ENCODE measurements at regions of chr17 and their contacts with region 1.

Region 1: DNA sequence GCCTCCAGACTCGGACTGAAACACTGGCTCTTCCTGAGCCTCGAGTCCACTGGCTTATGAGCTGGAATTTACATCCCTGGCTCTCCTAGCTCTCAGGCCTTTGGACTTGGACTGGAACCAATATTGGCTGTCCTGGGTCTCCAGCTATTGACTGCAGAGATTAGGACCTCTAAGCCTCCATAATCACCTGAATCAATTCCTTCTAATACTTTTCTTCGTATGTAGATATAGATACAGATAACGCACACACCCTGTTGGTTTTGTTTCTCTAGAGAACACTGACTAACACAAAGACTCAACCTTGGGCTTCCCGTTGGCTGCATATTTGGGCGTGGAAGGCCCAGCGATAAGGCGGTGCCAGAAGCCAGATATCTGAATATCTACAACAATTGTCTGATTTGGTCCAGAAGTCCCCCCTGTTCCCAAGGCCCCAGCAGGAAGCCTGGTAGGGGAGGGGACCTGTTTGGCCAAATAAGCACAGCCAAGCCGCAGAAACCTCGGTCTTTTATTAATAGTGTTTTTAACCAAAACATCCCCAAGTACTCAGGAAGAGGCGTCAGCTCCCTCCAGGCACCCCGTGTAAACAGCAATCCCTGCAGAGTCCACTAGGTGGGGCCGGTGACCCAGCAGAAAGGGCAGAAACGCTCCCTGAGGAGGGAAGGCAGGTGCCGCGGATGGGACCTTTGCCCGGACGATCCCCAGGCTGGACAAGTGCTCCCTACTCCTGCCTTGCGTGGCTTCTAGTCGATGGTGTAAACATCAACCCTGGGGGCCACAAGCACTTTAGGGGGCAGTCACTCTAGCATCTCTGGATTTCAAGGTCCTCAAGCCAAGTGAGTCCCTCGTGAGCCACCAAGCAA is 57.0 kb downstream of the ABR start:
- DNase-seq: peak in 1 of 2 donors; percentile 91
- H3K4me3 ChIP-seq: no peak overlapping the region
- H3K27ac ChIP-seq: peak overlapping the region; percentile 54 to 75
- H3K4me1 ChIP-seq: peaks cover 0 to 22% of the 10 kb centered on the region in 2 donors
- H3K27me3 ChIP-seq: no peaks in the 10 kb centered on the region
- CTCF ChIP-seq: peak; percentile 91 to 92 (median 92)

Region 2: DNA sequence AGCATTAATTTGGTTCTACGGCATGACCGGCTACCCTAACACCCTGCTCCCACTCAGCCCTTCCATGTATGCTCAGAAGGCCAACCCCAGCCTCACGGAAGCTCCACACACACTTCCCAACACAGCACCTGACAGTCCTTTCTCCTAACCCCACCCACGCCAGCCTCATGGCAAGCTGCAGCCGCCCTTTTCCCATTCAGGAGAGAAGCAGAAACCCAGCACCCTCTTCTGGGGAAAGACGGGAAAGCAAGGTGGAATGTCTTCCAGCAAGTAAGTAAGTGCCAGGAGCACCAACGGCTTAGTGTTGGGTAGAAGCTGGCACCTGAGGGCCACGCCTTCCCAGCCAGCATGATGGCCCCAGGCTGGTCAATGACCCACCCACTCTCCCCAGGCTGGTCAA is 24.9 kb after region 1 on chr17:
- intact Hi-C with region 1: loop called (anchors 1 kb)
- DNase-seq: peak in 1 of 2 donors; percentile 77
- H3K4me3 ChIP-seq: no peak overlapping the region
- H3K27ac ChIP-seq: no peak overlapping the region
- H3K4me1 ChIP-seq: no peaks in the 10 kb centered on the region
- H3K27me3 ChIP-seq: no peaks in the 10 kb centered on the region
- CTCF ChIP-seq: peak; percentile 40 to 62 (median 45)

Region 3: DNA sequence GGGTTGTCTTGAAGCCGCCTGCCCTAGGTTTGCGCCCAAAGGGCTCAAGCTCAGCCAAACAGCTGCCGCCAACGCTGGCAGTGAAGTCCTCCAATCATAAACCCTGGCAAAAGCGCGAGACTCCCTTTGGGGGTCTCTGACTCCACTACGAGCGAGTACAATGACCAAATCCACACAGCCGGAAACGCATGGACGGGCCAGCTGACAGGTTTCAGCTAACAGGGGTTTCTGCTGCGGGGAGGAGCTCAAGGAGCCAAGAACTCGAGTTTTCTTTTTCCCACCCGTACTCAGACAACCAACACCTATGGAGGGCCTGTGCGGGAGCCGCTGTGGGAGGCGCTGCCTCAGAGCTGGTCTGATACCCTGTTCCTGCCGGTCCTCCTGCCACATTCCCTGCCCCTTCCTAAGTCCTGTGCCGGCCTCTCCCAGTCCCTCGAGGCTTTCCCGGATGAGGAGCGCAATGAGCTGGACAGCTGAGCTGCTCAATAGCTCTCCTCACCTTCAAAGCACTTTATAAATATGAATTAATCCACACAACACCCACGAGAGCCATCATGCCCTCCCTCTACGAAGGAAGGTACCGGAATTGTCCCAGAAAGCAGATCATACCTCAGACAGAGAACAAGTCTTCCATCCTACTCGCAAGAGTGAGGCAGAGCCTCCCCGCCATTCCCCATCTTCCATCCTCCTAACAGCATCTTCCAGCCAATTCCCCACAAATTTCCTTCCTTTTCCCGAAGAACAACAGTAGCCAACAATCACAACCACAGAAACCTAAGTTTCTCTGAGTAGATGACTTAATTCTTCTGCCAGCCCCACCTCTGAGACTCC is 50.9 kb after region 1 on chr17:
- intact Hi-C with region 1: no loop called
- DNase-seq: no peak
- H3K4me3 ChIP-seq: no peak overlapping the region
- H3K27ac ChIP-seq: peak overlapping the region in 1 of 2 donors; percentile 25
- H3K4me1 ChIP-seq: peaks cover 3 to 16% of the 10 kb centered on the region in 2 donors
- H3K27me3 ChIP-seq: no peaks in the 10 kb centered on the region
- CTCF ChIP-seq: no peak

Region 4: GRCh38 chr17:1186923-1187771 is 64.4 kb after region 1 on chr17:
- intact Hi-C with region 1: loop called (anchors 1 kb)
- DNase-seq: peak in 1 of 2 donors; percentile 92
- H3K4me3 ChIP-seq: peak overlapping the region; percentile 25 to 50
- H3K27ac ChIP-seq: peak overlapping the region; percentile 86 to 91
- H3K4me1 ChIP-seq: peaks cover 15 to 32% of the 10 kb centered on the region in 2 donors
- H3K27me3 ChIP-seq: no peaks in the 10 kb centered on the region
- CTCF ChIP-seq: peak; percentile 97 to 100 (median 99)

Region 5: GRCh38 chr17:1216217-1217088 is 93.7 kb after region 1 on chr17:
- intact Hi-C with region 1: no loop called
- DNase-seq: no peak
- H3K4me3 ChIP-seq: no peak overlapping the region
- H3K27ac ChIP-seq: no peak overlapping the region
- H3K4me1 ChIP-seq: no peaks in the 10 kb centered on the region
- H3K27me3 ChIP-seq: no peaks in the 10 kb centered on the region
- CTCF ChIP-seq: no peak

Region 6: GRCh38 chr17:1267471-1267947 is 144.7 kb after region 1 on chr17:
- intact Hi-C with region 1: loop called (anchors 5 kb)
- DNase-seq: peak in 1 of 2 donors; percentile 77
- H3K4me3 ChIP-seq: peak overlapping the region; percentile 74 to 75
- H3K27ac ChIP-seq: peak overlapping the region; percentile 93 to 94
- H3K4me1 ChIP-seq: peaks cover 0 to 6% of the 10 kb centered on the region in 2 donors
- H3K27me3 ChIP-seq: no peaks in the 10 kb centered on the region
- CTCF ChIP-seq: no peak

Region 7: GRCh38 chr17:1331708-1332107 is 208.9 kb after region 1 on chr17:
- intact Hi-C with region 1: loop called (anchors 10 kb)
- DNase-seq: no peak
- H3K4me3 ChIP-seq: no peak overlapping the region
- H3K27ac ChIP-seq: no peak overlapping the region
- H3K4me1 ChIP-seq: no peaks in the 10 kb centered on the region
- H3K27me3 ChIP-seq: no peaks in the 10 kb centered on the region
- CTCF ChIP-seq: no peak